MCF 10A (cell line): ENCODE measurements at regions of chr2 and their contacts with region 1.

Region 1: DNA sequence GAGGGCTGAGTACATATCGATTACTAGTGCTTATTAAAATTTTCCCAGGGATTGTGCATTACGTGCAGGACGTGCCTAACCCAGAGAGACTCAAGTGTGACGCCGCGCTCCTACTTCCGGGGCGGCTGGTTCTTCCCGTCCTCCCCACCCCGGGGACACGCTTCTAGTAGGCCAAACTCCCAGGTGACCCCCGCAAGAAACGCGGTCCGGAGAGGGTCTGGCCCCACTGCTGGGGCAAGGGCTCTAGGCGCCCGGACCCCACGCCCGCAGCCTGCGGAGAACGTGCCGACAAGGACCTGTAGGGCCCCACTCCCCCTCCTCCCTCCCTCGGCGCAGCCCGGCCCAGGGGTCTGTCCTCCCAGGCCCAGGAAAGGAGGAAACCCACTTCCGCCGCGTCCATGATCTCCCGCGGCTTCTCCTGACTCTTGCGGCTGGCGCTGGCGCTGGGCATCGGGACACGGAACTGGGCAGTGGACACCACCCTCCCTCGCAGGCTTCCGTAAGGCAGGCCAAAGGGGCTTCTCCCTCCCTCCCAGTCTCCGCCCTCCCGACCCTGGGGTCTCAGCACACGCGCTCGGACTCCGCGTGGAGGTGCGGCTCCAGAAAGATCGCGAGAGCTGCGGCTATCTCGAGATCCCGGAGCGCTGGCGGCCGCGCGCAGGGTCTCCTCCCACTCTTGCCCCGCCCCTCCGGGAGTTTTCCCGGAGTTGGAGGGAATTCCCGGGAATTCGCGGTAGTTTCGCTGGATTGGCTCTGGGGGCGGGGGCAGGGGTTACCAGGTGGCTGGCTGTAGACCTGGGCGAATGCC is at the start of gene DARS1:
- DNase-seq: peak; percentile 91
- H3K4me3 Mint-ChIP-seq: peak within 1 kb of the TSS; percentile 91
- H3K27ac Mint-ChIP-seq: peak within 1 kb of the TSS; percentile 98
- H3K4me1 Mint-ChIP-seq: peaks cover 6% of the 10 kb centered on the region
- H3K27me3 Mint-ChIP-seq: no peaks in the 10 kb centered on the region
- CTCF ChIP-seq: no peak
- total RNA-seq, gene DARS1: 52.8 and 66.5 TPM in 2 replicates

Region 2: DNA sequence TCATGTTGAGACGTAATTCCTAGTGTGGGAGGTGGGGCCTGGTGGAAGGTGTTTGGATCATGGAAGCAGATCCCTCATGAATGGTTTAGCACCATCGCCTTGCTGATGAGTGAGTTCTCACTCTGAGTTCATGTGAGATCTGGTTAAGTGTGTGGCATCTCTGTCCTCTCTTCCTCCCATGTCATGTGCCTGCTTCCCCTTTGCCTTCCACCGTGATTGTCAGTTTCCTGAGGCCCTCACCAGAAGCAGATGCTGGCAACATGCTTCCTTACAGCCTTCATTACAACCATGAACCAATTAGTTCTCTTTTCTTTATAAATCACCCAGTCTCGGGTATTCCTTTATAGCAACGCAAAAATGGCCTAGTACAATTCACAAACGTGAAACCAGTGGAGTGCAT is 94.4 kb before region 1 on chr2:
- CTCF ChIA-PET with region 1: no interaction called
- POLR2A ChIA-PET with region 1: no interaction called
- intact Hi-C with region 1: no loop called
- DNase-seq: no peak
- H3K4me3 Mint-ChIP-seq: no peak overlapping the region
- H3K27ac Mint-ChIP-seq: no peak overlapping the region
- H3K4me1 Mint-ChIP-seq: no peaks in the 10 kb centered on the region
- H3K27me3 Mint-ChIP-seq: peaks cover 1% of the 10 kb centered on the region
- CTCF ChIP-seq: no peak

Region 3: DNA sequence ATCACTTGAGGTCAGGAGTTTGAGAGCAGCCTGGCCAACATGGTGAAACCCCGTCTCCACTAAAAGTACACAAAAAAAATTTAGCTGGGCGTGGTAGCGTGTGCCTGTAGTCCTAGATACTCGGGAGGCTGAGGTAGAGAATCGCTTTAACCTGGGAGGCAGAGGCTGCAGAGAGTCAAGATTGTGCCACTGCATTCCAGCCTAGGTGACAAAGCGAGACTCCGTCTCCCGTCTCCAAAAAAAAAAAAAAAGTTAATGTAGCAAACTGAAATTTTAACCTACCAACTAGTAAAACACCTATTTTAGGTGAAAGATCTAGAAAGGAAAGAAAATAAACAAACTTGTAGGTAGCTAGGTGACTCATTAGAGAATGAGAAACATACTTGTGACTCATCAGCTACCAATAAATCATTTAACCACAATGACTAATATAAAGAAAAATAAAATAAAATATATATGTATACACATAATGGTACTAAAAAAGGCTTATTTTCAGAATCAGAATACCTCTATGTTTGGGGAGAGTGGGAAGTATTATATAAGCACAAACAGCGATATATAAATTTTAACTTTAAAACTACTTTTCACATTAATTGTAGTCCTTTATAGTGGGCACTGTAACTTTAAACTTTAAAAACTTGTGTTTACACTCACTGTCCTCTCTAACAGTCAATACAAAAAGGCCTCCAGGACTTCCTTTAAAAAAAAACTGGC is 36.4 kb before region 1 on chr2:
- CTCF ChIA-PET with region 1: no interaction called
- POLR2A ChIA-PET with region 1: interaction called, 35 read pairs
- intact Hi-C with region 1: no loop called
- DNase-seq: peak; percentile 86
- H3K4me3 Mint-ChIP-seq: peak overlapping the region; percentile 68
- H3K27ac Mint-ChIP-seq: peak overlapping the region; percentile 97
- H3K4me1 Mint-ChIP-seq: peaks cover 36% of the 10 kb centered on the region
- H3K27me3 Mint-ChIP-seq: no peaks in the 10 kb centered on the region
- CTCF ChIP-seq: no peak

Region 4: GRCh38 chr2:135963841-135964240 is 21.4 kb before region 1 on chr2:
- CTCF ChIA-PET with region 1: interaction called, 4 read pairs
- POLR2A ChIA-PET with region 1: interaction called, 12 read pairs
- intact Hi-C with region 1: no loop called
- DNase-seq: peak; percentile 32
- H3K4me3 Mint-ChIP-seq: no peak overlapping the region
- H3K27ac Mint-ChIP-seq: peak overlapping the region; percentile 63
- H3K4me1 Mint-ChIP-seq: peaks cover 8% of the 10 kb centered on the region
- H3K27me3 Mint-ChIP-seq: no peaks in the 10 kb centered on the region
- CTCF ChIP-seq: no peak

Region 5: DNA sequence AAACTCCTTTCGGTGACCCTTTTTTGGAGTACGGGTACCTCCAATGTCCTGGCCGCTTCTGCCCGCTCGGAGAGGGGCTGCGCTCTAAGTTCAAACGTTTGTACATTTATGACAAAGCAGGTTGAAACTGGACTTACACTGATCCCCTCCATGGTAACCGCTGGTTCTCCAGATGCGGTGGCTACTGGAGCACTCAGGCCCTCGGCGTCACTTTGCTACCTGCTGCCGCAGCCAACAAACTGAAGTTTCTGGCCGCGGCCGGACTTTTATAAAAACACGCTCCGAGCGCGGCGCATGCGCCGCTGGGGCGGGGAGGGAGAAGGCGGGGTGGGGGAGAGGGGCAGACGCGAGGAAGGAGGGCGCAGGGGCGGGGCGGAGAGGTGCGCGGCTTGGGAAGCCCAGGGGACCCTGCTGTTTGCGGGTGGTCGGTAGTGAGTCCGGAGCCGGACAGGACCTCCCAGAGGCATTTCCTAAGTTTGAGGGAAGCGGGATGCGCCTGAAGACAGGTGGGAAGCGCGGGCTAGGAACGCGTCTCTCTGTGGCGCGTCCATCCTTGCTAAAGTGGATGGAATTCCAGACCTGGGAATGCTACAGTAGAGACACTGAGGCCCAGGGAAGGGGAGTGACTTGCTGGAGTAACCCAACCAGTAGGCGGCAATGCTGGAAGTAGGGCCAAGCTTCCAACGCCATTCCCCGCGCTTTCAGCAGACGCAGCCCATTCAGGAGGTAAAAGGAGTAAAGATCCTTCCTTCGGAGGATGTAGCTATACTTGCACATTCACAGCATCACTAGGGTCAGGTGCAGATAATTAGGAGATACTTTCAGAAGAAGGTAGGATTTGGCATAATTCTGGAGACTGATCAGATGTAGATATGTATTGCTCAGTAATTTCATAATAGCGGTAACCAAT is 132.9 kb after region 1 on chr2 and contains the start of gene CXCR4:
- CTCF ChIA-PET with region 1: no interaction called
- POLR2A ChIA-PET with region 1: interaction called, 3 read pairs
- intact Hi-C with region 1: loop called (anchors 2 kb)
- DNase-seq: peak; percentile 38
- H3K4me3 Mint-ChIP-seq: peak within 1 kb of the TSS; percentile 87
- H3K27ac Mint-ChIP-seq: no peak within 1 kb of the TSS
- H3K4me1 Mint-ChIP-seq: peaks cover 15% of the 10 kb centered on the region
- H3K27me3 Mint-ChIP-seq: no peaks in the 10 kb centered on the region
- CTCF ChIP-seq: no peak
- total RNA-seq, gene CXCR4: 0.54 and 1.1 TPM in 2 replicates

Region 6: GRCh38 chr2:136135921-136136906 is 151.0 kb after region 1 on chr2:
- CTCF ChIA-PET with region 1: no interaction called
- POLR2A ChIA-PET with region 1: interaction called, 19 read pairs
- intact Hi-C with region 1: no loop called
- DNase-seq: peak; percentile 77
- H3K4me3 Mint-ChIP-seq: peak overlapping the region; percentile 1
- H3K27ac Mint-ChIP-seq: peak overlapping the region; percentile 96
- H3K4me1 Mint-ChIP-seq: peaks cover 41% of the 10 kb centered on the region
- H3K27me3 Mint-ChIP-seq: no peaks in the 10 kb centered on the region
- CTCF ChIP-seq: no peak

Region 7: DNA sequence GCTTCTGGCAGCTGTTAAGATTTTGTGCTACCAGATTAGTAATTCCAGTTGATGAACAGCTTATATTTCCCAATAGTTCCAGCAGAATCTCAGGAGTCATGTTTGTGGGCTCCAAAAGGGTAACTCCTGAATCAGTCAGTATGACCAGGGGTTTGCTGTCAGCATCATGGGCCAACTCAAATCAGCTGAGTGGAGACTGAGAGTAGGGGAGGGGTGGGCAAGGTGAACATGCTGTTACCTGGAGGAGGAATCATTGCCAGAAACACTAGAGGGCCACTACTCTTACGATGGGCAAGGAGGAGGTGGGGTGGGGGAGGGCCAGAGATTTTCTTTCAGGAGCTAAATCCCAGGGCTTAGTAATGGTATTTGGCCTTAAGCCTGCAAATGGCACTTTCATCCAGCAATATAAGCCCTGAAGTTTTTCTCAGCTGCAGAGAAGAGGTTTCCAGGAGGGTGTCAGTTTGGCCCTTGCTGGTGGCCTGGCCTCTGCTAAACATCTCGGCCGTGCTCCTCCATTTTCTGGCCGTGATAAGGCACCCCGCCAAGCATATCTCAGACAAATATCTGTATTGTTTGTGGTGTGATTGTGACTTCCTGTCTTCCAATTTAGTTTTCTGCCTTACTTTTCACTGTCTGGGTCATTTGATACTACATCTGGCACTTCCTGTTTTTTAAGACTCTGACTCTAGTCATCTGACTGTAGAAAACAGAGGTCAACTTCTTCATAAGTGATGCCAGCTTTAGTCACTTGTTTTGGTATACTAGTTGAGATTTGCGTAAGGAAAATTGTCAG is 253.3 kb after region 1 on chr2:
- CTCF ChIA-PET with region 1: no interaction called
- POLR2A ChIA-PET with region 1: no interaction called
- intact Hi-C with region 1: loop called (anchors 10 kb)
- DNase-seq: peak; percentile 72
- H3K4me3 Mint-ChIP-seq: no peak overlapping the region
- H3K27ac Mint-ChIP-seq: peak overlapping the region; percentile 67
- H3K4me1 Mint-ChIP-seq: peaks cover 49% of the 10 kb centered on the region
- H3K27me3 Mint-ChIP-seq: no peaks in the 10 kb centered on the region
- CTCF ChIP-seq: no peak

Region 8: GRCh38 chr2:136378712-136379595 is 393.7 kb after region 1 on chr2:
- CTCF ChIA-PET with region 1: interaction called, 4 read pairs
- POLR2A ChIA-PET with region 1: interaction called, 3 read pairs
- intact Hi-C with region 1: loop called (anchors 2 kb)
- DNase-seq: peak; percentile 58
- H3K4me3 Mint-ChIP-seq: no peak overlapping the region
- H3K27ac Mint-ChIP-seq: no peak overlapping the region
- H3K4me1 Mint-ChIP-seq: peaks cover 23% of the 10 kb centered on the region
- H3K27me3 Mint-ChIP-seq: no peaks in the 10 kb centered on the region
- CTCF ChIP-seq: peak; percentile 68